ENCODE measurements at regions of chr7 and their contacts with region 1.

Region 1: GRCh38 chr7:113421696-113422330 is 303.5 kb upstream of the SMIM30 start:
- DNase-seq: peak; percentile 91
- H3K4me3 Mint-ChIP-seq: no peak overlapping the region
- H3K27ac Mint-ChIP-seq: no peak overlapping the region
- H3K4me1 Mint-ChIP-seq: peaks cover 5% of the 10 kb centered on the region
- H3K27me3 Mint-ChIP-seq: no peaks in the 10 kb centered on the region

Region 2: GRCh38 chr7:111741811-111742240 is 1680.0 kb before region 1 on chr7:
- intact Hi-C with region 1: loop called (anchors 5 kb)
- DNase-seq: peak; percentile 75
- H3K4me3 Mint-ChIP-seq: no peak overlapping the region
- H3K27ac Mint-ChIP-seq: no peak overlapping the region
- H3K4me1 Mint-ChIP-seq: no peaks in the 10 kb centered on the region
- H3K27me3 Mint-ChIP-seq: no peaks in the 10 kb centered on the region

Region 3: DNA sequence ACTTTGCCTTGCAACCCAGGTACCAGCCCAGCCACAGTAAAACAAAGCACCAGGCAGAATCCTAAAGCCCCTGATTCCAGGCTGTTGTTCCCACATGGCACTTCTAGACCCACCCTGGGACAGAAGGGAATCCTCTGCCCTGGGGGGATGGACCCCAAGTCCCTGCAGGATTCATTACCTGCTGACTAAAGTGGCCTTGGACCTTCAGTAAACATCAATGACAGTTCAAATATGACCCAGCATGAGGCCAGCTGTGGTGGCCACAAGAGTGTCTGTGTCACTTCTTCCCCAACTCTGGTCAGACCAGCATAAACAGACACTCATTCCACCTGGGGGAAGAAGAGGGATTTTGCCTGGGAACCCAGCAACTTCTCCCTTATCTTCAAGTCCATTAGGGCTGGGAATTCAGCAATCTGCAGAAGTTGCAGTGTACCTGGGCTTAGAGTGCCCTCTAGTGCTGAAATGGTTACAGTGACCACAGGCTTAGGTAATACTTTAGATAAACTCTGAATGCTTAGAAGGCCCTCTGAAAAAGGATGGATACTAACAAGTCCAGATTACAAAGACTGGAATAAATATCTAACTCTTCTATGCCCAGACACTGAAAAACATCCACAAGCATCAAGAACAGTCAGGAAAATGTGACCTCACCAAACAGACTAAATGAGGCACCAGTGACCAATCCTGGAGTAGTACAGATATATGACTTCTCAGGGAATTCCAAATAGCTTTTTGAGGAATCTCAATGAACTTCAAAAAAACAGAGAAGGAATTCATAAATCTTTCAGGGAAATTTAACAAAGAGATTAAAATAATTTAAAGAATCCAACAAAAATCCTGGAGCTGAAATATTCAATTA is 523.2 kb before region 1 on chr7:
- intact Hi-C with region 1: loop called (anchors 2 kb)
- DNase-seq: peak; percentile 83
- H3K4me3 Mint-ChIP-seq: no peak overlapping the region
- H3K27ac Mint-ChIP-seq: no peak overlapping the region
- H3K4me1 Mint-ChIP-seq: no peaks in the 10 kb centered on the region
- H3K27me3 Mint-ChIP-seq: no peaks in the 10 kb centered on the region

Region 4: DNA sequence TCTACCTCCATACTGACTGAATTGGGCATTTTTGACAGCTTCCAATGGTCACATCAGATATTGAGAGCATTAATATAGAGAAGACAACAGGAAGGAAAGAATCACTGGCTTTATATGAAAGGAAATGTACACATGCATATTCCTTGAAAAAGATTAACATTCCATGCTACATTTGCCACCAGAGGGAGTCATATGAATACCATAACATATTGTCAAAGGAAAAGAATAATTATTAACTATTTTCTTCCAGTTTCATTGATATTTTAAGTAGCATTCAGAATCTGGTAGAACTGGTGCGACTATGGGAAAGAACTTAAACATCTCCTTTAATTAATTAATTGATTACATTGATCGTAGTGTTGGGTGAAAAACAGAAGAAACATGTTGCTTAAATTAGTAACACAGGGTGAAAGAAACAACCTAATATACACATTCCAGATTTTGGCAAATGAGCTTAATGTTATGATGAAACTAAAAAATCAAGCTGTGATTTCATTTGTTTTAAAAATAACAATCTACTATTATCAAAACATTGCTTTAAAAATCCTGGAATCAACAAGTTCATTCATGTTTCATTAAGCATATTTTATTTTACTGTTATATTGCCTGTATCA is 406.7 kb before region 1 on chr7:
- intact Hi-C with region 1: no loop called
- DNase-seq: no peak
- H3K4me3 Mint-ChIP-seq: no peak overlapping the region
- H3K27ac Mint-ChIP-seq: no peak overlapping the region
- H3K4me1 Mint-ChIP-seq: no peaks in the 10 kb centered on the region
- H3K27me3 Mint-ChIP-seq: no peaks in the 10 kb centered on the region

Measured in activated CD4-positive, alpha-beta T cell treated with anti-CD3 and anti-CD28 coated beads, Interleukin-2, amount 10 ng/mL, durations not matched to agents 24 days and 14 days (primary cell).